Activated T-helper 1 cell treated with anti-CD3 and anti-CD28 coated beads, Interleukin-12 subunit alpha, Interleukin-12 subunit beta, Interleukin-2, Interleukin-4 antibody, amounts not matched to agents 30 ng/mL and 10 ng/mL and 1 ng/mL, durations not matched to agents 14 hours and 24 hours and 36 hours (primary cell): ENCODE measurements at regions of chr1 and their contacts with region 1.

Region 1: GRCh38 chr1:95116580-95117206 is 462 bp upstream of the TLCD4 start:
- DNase-seq: no peak
- H3K4me3 Mint-ChIP-seq: peak overlapping the region; percentile 84
- H3K27ac Mint-ChIP-seq: no peak overlapping the region
- H3K4me1 Mint-ChIP-seq: peaks cover 5% of the 10 kb centered on the region
- H3K27me3 Mint-ChIP-seq: peaks cover 53% of the 10 kb centered on the region

Region 2: GRCh38 chr1:94929351-94930217 is 187.1 kb before region 1 on chr1:
- intact Hi-C with region 1: no loop called
- DNase-seq: no peak
- H3K4me3 Mint-ChIP-seq: no peak overlapping the region
- H3K27ac Mint-ChIP-seq: no peak overlapping the region
- H3K4me1 Mint-ChIP-seq: peaks cover 9% of the 10 kb centered on the region
- H3K27me3 Mint-ChIP-seq: peaks cover 35% of the 10 kb centered on the region

Region 3: GRCh38 chr1:95023399-95024043 is 93.2 kb before region 1 on chr1:
- intact Hi-C with region 1: no loop called
- DNase-seq: no peak
- H3K4me3 Mint-ChIP-seq: no peak overlapping the region
- H3K27ac Mint-ChIP-seq: no peak overlapping the region
- H3K4me1 Mint-ChIP-seq: no peaks in the 10 kb centered on the region
- H3K27me3 Mint-ChIP-seq: no peaks in the 10 kb centered on the region

Region 4: DNA sequence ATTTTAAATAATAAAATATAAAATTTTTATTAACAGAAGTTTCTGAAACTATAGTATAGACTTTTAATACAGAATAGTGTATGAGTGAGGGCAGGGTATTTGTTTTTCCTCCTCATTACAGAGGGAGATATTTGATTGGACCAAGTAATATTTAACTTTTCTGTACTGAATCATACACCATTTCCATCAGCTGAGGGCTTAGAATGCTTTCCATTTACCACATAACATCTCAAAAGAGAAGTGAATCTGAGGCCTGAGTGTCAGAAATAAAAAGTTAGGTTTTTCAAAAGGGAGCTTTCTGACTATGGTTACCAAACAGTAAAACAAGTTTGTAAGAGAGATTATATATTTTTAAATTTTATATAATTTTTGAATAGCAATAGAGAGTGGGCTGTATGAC is 29.9 kb after region 1 on chr1:
- intact Hi-C with region 1: loop called (anchors 1 kb)
- DNase-seq: no peak
- H3K4me3 Mint-ChIP-seq: no peak overlapping the region
- H3K27ac Mint-ChIP-seq: no peak overlapping the region
- H3K4me1 Mint-ChIP-seq: no peaks in the 10 kb centered on the region
- H3K27me3 Mint-ChIP-seq: no peaks in the 10 kb centered on the region